ENCODE measurements at regions of chr10 and their contacts with region 1.

Region 1: DNA sequence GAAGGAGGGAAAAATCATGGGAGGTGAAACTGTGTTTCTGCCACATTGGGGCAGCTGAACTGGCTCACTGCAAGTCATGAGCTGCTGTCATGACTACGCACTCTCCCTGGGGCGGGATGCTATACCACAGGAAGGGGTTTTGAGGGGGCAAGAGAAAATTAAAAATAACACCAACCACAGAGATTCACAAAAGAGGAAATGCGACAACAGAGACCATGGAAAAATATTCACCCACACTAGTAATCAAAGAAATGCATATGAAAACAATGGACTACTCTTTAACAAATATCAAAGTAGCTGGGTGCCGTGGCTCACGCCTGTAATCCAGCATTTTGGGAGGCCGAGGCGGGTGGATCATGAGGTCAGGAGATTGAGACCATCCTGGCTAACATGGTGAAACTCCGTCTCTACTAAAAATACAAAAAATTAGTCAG is 65.2 kb upstream of the TM9SF3 start:
- DNase-seq: peak; percentile 79
- ATAC-seq: peak; percentile 89
- H3K4me3 ChIP-seq: no peak overlapping the region
- H3K27ac ChIP-seq: peak overlapping the region; percentile 79
- H3K4me1 ChIP-seq: peaks cover 50% of the 10 kb centered on the region
- H3K27me3 ChIP-seq: no peaks in the 10 kb centered on the region
- CTCF ChIP-seq: no peak
- EP300 ChIP-seq: peak; percentile 85 to 95
- POLR2A ChIP-seq: no peak
- RAD21 ChIP-seq: 0 out of 2 replicates have a peak, but pooled peaks have one; percentile 2

Region 2: GRCh38 chr10:96664563-96664962 is 12.5 kb after region 1 on chr10:
- CTCF ChIA-PET with region 1: interaction called, 9 read pairs
- POLR2A ChIA-PET with region 1: interaction called, 3 read pairs
- RAD21 ChIA-PET with region 1: interaction called, 3 read pairs
- SMC1A ChIA-PET with region 1: interaction called, 35 read pairs
- in situ Hi-C with region 1: no loop called
- intact Hi-C with region 1: no loop called
- DNase-seq: no peak
- ATAC-seq: peak; percentile 58
- H3K4me3 ChIP-seq: no peak overlapping the region; the same call in 1 of the 2 replicates
- H3K27ac ChIP-seq: no peak overlapping the region
- H3K4me1 ChIP-seq: peaks cover 34% of the 10 kb centered on the region
- H3K27me3 ChIP-seq: no peaks in the 10 kb centered on the region
- CTCF ChIP-seq: no peak
- EP300 ChIP-seq: no peak
- POLR2A ChIP-seq: no peak
- RAD21 ChIP-seq: no peak

Region 3: DNA sequence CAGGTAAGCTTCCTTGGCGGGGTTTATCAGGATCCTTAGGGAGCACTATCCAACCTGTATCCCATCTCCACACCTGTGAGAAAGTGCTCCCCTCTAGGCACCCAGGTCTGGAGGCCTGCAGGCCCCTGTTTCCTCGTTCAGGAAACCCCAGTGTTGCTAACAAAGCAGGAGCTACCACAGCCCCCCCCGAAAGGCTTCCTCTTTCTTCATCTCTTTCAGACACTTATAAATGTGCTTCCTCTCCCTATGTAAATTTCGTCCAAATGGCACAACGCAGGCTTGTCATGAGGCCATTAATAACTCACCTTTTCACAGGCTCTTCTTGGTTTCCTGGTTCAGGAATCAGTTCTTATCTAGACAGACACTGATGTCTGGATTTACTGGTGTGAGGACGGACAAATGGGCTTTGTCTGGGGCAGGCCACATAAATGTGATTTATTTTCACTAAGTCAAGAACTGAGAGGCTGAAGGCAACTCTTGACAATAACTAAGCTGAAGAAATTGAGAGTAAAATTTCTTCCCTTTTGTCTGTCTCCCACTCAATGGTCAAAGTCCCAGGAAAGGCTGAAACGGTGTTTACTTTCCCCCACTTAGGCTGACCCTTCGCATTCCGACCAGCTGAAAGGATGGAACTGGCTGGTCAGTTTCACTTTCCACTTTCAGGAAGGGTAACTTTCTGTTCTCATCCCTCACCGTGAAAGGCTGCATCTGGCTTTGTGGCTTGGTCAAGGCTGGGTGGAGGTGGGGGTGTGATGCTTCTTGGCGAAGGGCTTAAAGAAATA is 21.5 kb after region 1 on chr10:
- CTCF ChIA-PET with region 1: interaction called, 13 read pairs
- POLR2A ChIA-PET with region 1: interaction called, 5 read pairs
- RAD21 ChIA-PET with region 1: interaction called, 4 read pairs
- SMC1A ChIA-PET with region 1: interaction called, 35 read pairs
- in situ Hi-C with region 1: no loop called
- intact Hi-C with region 1: no loop called
- DNase-seq: peak; percentile 67
- ATAC-seq: peak; percentile 80
- H3K4me3 ChIP-seq: peak overlapping the region; percentile 54; the same call in 1 of the 2 replicates
- H3K27ac ChIP-seq: peak overlapping the region; percentile 40
- H3K4me1 ChIP-seq: peaks cover 79% of the 10 kb centered on the region
- H3K27me3 ChIP-seq: no peaks in the 10 kb centered on the region
- CTCF ChIP-seq: no peak
- EP300 ChIP-seq: peak in 1 of 2 experiments; percentile 8; a peak in 1 of 4 replicates
- POLR2A ChIP-seq: no peak
- RAD21 ChIP-seq: no peak

Region 4: DNA sequence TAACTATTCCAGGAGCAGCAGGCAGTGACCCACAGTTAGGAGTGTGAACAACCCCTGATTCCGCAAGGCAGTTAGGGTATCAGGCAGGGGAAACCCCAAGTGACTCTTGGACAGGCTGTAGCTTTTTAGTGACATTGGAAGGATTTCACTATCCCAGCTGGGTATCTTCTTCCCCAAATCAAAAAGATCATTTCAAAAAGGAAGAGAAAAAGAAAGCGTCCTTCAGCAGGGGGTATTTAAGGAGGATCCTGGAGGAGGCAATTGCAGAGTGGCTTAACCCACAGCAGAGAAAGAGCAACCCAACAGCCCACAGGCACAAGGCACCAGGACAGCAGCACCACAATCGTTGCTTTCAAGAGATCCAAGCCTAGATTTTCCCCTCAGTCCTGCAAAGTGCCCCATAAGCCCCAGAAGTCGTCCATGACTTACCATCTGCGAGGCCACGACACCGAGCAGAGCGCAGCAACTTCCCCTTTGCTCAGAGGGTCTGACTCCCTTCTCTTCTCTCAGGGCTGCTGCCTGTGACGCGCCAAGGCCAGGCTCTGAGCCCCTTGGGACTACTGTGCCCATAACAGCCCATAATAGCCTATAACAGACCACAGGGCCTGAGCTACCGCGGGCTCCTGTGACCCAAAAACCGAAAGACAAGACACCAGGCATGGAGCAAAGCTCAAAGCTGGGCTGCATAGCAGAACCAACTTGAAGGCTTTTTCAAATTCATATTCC is 48.5 kb after region 1 on chr10:
- CTCF ChIA-PET with region 1: interaction called, 7 read pairs
- POLR2A ChIA-PET with region 1: interaction called, 8 read pairs
- RAD21 ChIA-PET with region 1: interaction called, 33 read pairs
- SMC1A ChIA-PET with region 1: interaction called, 49 read pairs
- in situ Hi-C with region 1: no loop called
- intact Hi-C with region 1: loop called (anchors 2 kb)
- DNase-seq: no peak
- ATAC-seq: peak; percentile 78
- H3K4me3 ChIP-seq: peak overlapping the region; percentile 82
- H3K27ac ChIP-seq: peak overlapping the region; percentile 85
- H3K4me1 ChIP-seq: peaks cover 45% of the 10 kb centered on the region
- H3K27me3 ChIP-seq: no peaks in the 10 kb centered on the region
- CTCF ChIP-seq: no peak
- EP300 ChIP-seq: peak; percentile 59 to 79; a peak in 2 of 4 replicates
- POLR2A ChIP-seq: peak; percentile 87
- RAD21 ChIP-seq: no peak

Region 5: DNA sequence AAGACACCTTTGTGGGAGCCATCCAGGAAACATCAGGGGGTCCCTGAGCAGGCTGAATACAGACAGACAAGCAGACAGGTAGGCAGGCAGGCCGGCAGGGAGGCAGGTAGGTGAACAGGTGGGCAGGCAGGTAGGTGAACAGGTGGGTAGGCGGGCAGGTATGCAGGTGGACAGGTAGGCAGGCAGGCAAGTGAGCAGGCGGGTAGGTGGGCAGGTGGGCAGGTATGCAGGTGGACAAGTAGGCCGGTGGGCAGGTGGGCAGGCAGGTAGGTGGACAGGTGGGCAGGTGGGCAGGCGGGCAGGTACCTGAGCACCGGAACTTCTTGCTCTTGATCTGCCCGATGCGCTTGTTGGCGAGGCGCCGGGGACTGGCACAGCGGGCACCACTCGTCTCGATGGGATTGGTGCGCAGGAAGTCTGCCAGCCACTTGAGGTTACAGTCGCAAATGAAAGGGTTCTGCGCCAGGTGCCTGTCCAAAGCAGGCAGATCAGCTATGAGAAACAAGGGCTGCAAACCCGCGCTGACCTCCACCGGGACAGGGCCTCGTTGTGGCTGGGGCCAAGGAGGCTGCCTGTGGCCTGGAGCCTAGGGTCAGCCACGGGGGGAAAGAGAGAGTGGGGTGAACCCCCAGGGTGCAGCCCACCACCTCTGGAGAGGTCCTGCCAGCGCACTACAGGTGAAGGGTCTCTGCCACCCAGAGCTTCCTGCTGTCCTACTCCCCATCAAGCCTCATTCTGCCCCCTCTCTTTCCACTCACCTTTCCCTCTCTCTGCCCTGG is 396.8 kb after region 1 on chr10:
- CTCF ChIA-PET with region 1: no interaction called
- POLR2A ChIA-PET with region 1: no interaction called
- RAD21 ChIA-PET with region 1: no interaction called
- SMC1A ChIA-PET with region 1: no interaction called
- in situ Hi-C with region 1: no loop called
- intact Hi-C with region 1: no loop called
- DNase-seq: no peak
- ATAC-seq: no peak
- H3K4me3 ChIP-seq: no peak overlapping the region
- H3K27ac ChIP-seq: no peak overlapping the region
- H3K4me1 ChIP-seq: peaks cover 8% of the 10 kb centered on the region
- H3K27me3 ChIP-seq: no peaks in the 10 kb centered on the region
- CTCF ChIP-seq: no peak
- EP300 ChIP-seq: no peak
- POLR2A ChIP-seq: no peak
- RAD21 ChIP-seq: no peak